Common myeloid progenitor, CD34-positive (primary cell): ENCODE measurements at regions of chr5 and their contacts with region 1.

Region 1: DNA sequence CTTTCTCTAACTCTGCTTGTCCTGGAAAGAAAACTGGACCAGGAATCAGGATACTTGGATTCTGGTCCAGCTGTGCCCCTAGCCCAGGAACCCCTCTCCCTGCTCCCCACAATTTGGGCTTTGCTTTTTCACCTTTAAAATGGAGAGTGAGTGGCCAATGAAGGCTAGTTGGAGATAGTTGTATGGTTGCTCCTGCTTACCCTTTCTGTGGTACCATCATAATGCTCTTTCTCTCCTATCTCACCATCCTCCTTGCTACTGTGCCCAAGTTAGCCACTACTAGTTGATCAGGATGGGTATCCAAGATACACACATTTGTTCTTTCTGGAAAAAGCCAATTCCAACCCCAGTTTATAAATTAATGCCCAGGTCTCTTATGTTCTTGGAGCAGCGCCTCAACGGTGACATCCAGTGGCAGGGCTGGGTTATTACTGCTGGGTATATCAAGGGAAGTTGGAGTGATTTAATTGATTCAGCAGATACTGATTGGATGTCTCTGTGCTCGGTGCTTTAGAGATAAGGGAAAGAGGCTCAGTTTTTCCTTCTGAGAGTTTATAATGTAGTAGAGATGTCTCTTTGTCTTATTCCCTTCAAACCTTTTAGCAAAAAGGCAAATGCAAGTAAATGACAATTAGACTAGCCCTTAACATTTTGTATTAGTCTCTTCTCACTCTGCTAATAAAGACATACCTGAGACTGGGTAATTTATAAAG is 38.6 kb downstream of the FAXDC2 start:
- DNase-seq: peak; percentile 72 to 87 (median 83)
- H3K4me3 ChIP-seq: no peak overlapping the region
- H3K27ac ChIP-seq: no peak overlapping the region
- H3K4me1 ChIP-seq: peaks cover 0 to 28% (median 18%) of the 10 kb centered on the region in 4 experiments
- H3K27me3 ChIP-seq: no peaks in the 10 kb centered on the region

Region 2: DNA sequence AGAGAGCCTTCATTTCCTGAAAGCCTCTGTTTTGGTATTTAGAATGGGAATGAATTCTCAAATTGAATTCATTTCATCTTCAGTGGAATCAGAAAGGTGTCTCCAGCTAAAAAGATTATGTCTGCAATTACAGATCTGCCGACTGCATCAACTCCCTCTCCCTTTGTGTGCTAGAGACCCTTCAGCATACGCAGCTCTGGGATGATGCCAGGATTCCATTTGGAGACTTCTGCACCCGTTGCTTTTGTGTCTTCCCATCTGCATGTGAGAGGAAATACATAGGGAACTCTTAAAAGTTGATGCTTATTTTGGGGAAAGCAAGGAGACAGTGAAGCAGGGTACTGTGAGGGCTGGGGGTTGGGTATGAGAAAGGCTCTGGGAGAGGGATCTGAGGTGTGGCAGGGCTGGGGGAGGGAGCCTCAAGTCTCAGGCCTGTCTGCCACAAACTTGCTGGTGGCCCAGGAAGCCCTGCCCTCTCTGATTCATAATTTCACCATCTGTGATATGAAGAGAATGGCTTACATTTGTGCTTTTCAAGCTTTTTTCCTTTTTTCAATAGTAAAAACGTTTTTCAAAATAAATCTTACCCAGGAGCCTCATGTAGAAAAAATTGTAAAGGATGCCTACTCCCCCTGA is 455.7 kb before region 1 on chr5:
- CTCF ChIA-PET with region 1: no interaction called
- POLR2A ChIA-PET with region 1: no interaction called
- DNase-seq: no peak
- H3K4me3 ChIP-seq: no peak overlapping the region
- H3K27ac ChIP-seq: no peak overlapping the region
- H3K4me1 ChIP-seq: no peaks in the 10 kb centered on the region
- H3K27me3 ChIP-seq: no peaks in the 10 kb centered on the region

Region 3: GRCh38 chr5:154648706-154649105 is 163.1 kb before region 1 on chr5:
- CTCF ChIA-PET with region 1: interaction called, 49 read pairs
- POLR2A ChIA-PET with region 1: no interaction called
- DNase-seq: peak in 2 of 3 donors; percentile 47 to 51
- H3K4me3 ChIP-seq: no peak overlapping the region
- H3K27ac ChIP-seq: no peak overlapping the region
- H3K4me1 ChIP-seq: peaks cover 0 to 35% (median 25%) of the 10 kb centered on the region in 4 experiments
- H3K27me3 ChIP-seq: peaks cover 0 to 4% (median 0%) of the 10 kb centered on the region in 5 experiments